ENCODE measurements at regions of chr10 and their contacts with region 1.

Region 1: GRCh38 chr10:95363303-95363912 is 72.6 kb upstream of the PDLIM1 start:
- DNase-seq: peak; percentile 84
- H3K4me3 Mint-ChIP-seq: no peak overlapping the region
- H3K27ac Mint-ChIP-seq: no peak overlapping the region
- H3K4me1 Mint-ChIP-seq: peaks cover 16% of the 10 kb centered on the region
- H3K27me3 Mint-ChIP-seq: peaks cover 18% of the 10 kb centered on the region
- CTCF ChIP-seq: peak; percentile 86

Region 2: GRCh38 chr10:95183271-95184230 is 179.9 kb before region 1 on chr10:
- CTCF ChIA-PET with region 1: interaction called, 18 read pairs
- POLR2A ChIA-PET with region 1: no interaction called
- intact Hi-C with region 1: loop called (anchors 1 kb)
- DNase-seq: peak; percentile 80
- H3K4me3 Mint-ChIP-seq: peak overlapping the region; percentile 73
- H3K27ac Mint-ChIP-seq: no peak overlapping the region
- H3K4me1 Mint-ChIP-seq: peaks cover 6% of the 10 kb centered on the region
- H3K27me3 Mint-ChIP-seq: peaks cover 13% of the 10 kb centered on the region
- CTCF ChIP-seq: peak; percentile 96

Region 3: DNA sequence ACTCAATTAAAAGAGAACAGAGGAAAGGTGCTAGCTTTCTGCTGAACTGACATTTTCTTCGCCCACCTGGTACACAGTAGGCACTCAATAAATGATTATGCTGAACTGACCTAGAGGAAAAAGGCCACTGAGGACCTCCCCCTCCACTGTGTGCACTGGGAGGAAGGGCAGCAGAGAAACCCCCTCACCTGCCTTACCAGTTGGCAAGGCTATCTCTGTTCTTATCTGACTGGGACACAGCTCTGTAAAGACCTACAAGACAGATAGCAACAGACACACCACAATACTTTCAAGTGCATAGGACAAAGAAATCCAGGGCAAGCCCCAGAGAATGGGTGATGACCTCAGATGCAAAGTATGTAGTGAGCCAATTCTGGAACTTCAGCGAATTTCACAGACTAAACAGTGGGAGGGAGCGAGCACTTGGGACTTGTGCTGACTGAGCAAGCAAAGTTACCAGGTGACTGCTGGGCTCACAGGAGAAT is 103.0 kb before region 1 on chr10:
- CTCF ChIA-PET with region 1: interaction called, 10 read pairs
- POLR2A ChIA-PET with region 1: interaction called, 3 read pairs
- intact Hi-C with region 1: no loop called
- DNase-seq: peak; percentile 73
- H3K4me3 Mint-ChIP-seq: no peak overlapping the region
- H3K27ac Mint-ChIP-seq: peak overlapping the region; percentile 77
- H3K4me1 Mint-ChIP-seq: peaks cover 28% of the 10 kb centered on the region
- H3K27me3 Mint-ChIP-seq: no peaks in the 10 kb centered on the region
- CTCF ChIP-seq: no peak

Region 4: GRCh38 chr10:95308389-95309302 is 54.8 kb before region 1 on chr10:
- CTCF ChIA-PET with region 1: interaction called, 7 read pairs
- POLR2A ChIA-PET with region 1: no interaction called
- intact Hi-C with region 1: loop called (anchors 5 kb)
- DNase-seq: peak; percentile 98
- H3K4me3 Mint-ChIP-seq: peak overlapping the region; percentile 4
- H3K27ac Mint-ChIP-seq: peak overlapping the region; percentile 6
- H3K4me1 Mint-ChIP-seq: peaks cover 27% of the 10 kb centered on the region
- H3K27me3 Mint-ChIP-seq: peaks cover 12% of the 10 kb centered on the region
- CTCF ChIP-seq: no peak

Region 5: GRCh38 chr10:95430231-95430951 is 67.0 kb after region 1 on chr10:
- CTCF ChIA-PET with region 1: interaction called, 13 read pairs
- POLR2A ChIA-PET with region 1: no interaction called
- intact Hi-C with region 1: no loop called
- DNase-seq: peak; percentile 73
- H3K4me3 Mint-ChIP-seq: no peak overlapping the region
- H3K27ac Mint-ChIP-seq: no peak overlapping the region
- H3K4me1 Mint-ChIP-seq: peaks cover 11% of the 10 kb centered on the region
- H3K27me3 Mint-ChIP-seq: peaks cover 7% of the 10 kb centered on the region
- CTCF ChIP-seq: peak; percentile 89